IMR-90 (cell line): ENCODE measurements at regions of chr14 and their contacts with region 1.

Region 1: DNA sequence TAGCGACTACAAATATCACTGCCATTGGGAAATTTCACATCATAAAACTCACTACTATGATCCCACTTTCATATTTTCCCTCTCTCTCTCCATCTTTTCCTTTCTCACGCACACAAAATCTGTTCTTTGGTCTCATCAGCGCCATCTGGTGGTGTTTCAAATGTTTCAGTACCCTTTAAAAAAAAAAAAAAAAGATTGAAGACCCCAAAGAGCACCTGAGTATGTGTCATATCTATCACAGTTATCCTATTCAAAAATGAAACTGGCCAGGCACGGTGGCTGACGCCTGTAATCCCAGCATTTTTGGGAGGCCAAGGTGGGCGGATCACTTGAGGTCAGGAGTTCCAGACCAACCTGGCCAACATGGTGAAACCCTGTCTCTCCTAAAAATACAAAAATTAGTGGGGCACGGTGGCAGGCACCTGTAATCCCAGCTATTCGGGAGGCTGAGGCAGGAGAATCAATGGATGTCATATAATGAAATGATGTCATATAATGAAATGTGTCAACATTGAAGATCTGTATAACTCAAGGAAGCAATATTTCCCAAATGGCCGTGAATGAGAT is 72.4 kb downstream of the TTC9 start:
- DNase-seq: peak; percentile 63
- ATAC-seq: no peak
- H3K4me3 ChIP-seq: no peak overlapping the region
- H3K27ac ChIP-seq: no peak overlapping the region
- H3K4me1 ChIP-seq: no peaks in the 10 kb centered on the region
- H3K27me3 ChIP-seq: peaks cover 26% of the 10 kb centered on the region
- CTCF ChIP-seq: peak; percentile 58
- POLR2A ChIP-seq: no peak
- RAD21 ChIP-seq: peak; percentile 44

Region 2: DNA sequence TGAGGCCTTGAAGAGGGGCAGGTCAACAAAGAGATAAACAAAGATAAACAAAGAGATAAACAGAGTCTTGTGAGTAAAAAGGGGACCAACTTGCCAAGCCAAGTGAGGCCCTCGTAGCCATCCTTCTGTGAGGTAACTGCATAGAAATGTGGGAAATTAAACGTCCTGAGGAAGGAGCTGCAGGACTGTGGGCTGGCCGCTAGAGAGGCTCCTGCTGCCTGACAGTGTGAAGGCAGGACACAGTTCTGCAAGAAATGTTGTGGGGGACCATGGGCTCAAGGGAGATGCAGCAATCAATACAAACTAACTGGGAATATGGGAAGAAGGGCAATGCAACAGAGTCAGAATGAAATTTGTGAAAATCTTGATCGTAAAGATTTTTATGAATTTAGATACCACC is 617.3 kb before region 1 on chr14:
- CTCF ChIA-PET with region 1: no interaction called
- POLR2A ChIA-PET with region 1: no interaction called
- dilution Hi-C with region 1: no loop called
- in situ Hi-C with region 1: no loop called
- intact Hi-C with region 1: loop called (anchors 10 kb)
- DNase-seq: peak; percentile 14
- ATAC-seq: peak; percentile 80
- H3K4me3 ChIP-seq: no peak overlapping the region
- H3K27ac ChIP-seq: no peak overlapping the region
- H3K4me1 ChIP-seq: no peaks in the 10 kb centered on the region
- H3K27me3 ChIP-seq: peaks cover 7% of the 10 kb centered on the region
- CTCF ChIP-seq: peak; percentile 20; the same call in 1 of the 2 replicates
- POLR2A ChIP-seq: no peak
- RAD21 ChIP-seq: no peak

Region 3: GRCh38 chr14:70887207-70887681 is 173.1 kb after region 1 on chr14:
- CTCF ChIA-PET with region 1: no interaction called
- POLR2A ChIA-PET with region 1: no interaction called
- dilution Hi-C with region 1: no loop called
- in situ Hi-C with region 1: no loop called
- intact Hi-C with region 1: loop called (anchors 5 kb)
- DNase-seq: peak; percentile 98
- ATAC-seq: peak; percentile 82
- H3K4me3 ChIP-seq: no peak overlapping the region
- H3K27ac ChIP-seq: peak overlapping the region; percentile 65; the same call in 1 of the 2 replicates
- H3K4me1 ChIP-seq: peaks cover 13% of the 10 kb centered on the region
- H3K27me3 ChIP-seq: no peaks in the 10 kb centered on the region
- CTCF ChIP-seq: no peak
- POLR2A ChIP-seq: no peak
- RAD21 ChIP-seq: no peak; the same call in 1 of the 2 replicates

Region 4: GRCh38 chr14:70972107-70972976 is 258.2 kb after region 1 on chr14:
- CTCF ChIA-PET with region 1: no interaction called
- POLR2A ChIA-PET with region 1: no interaction called
- dilution Hi-C with region 1: no loop called
- in situ Hi-C with region 1: no loop called
- intact Hi-C with region 1: loop called (anchors 5 kb)
- DNase-seq: peak; percentile 88
- ATAC-seq: peak; percentile 90
- H3K4me3 ChIP-seq: no peak overlapping the region
- H3K27ac ChIP-seq: no peak overlapping the region
- H3K4me1 ChIP-seq: peaks cover 2% of the 10 kb centered on the region; the same call in 1 of the 2 replicates
- H3K27me3 ChIP-seq: no peaks in the 10 kb centered on the region
- CTCF ChIP-seq: peak; percentile 91
- POLR2A ChIP-seq: peak; percentile 22; the same call in 1 of the 2 replicates
- RAD21 ChIP-seq: peak; percentile 90